ENCODE measurements at regions of chr6 and their contacts with region 1.

Region 1: DNA sequence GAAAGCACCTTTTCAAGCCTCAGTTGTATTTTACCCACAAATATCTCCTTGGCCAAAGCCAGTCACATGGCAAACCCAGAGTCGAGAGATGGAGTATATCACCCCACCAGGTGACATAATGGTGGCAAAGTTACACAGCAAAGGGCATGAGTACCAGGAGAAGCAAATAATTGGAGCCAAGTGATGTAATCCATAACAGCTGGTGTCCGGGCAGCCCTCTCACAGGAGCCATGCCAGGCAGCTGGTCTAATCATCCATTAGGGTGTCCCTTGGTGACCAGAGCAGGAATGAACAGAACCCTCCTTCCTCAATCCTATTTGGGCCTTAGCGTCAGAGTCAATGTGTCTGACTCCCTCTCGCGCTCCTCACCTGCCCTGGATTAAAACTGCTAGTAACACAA is 272.1 kb downstream of the LRFN2 start:
- DNase-seq: no peak
- H3K4me3 ChIP-seq: no peak overlapping the region
- H3K27ac ChIP-seq: no peak overlapping the region
- H3K4me1 ChIP-seq: no peaks in the 10 kb centered on the region
- H3K27me3 ChIP-seq: no peaks in the 10 kb centered on the region; a peak in 1 of 7 replicates
- CTCF ChIP-seq: no peak
- EP300 ChIP-seq: no peak
- POLR2A ChIP-seq: no peak
- RAD21 ChIP-seq: no peak

Region 2: GRCh38 chr6:39980839-39981580 is 334.1 kb before region 1 on chr6:
- CTCF ChIA-PET with region 1: interaction called, 15 read pairs
- POLR2A ChIA-PET with region 1: no interaction called
- DNase-seq: peak; percentile 7 to 48
- H3K4me3 ChIP-seq: no peak overlapping the region
- H3K27ac ChIP-seq: no peak overlapping the region
- H3K4me1 ChIP-seq: peaks cover 0 to 6% (median 2%) of the 10 kb centered on the region in 4 experiments; a peak in 2 of 7 replicates
- H3K27me3 ChIP-seq: no peaks in the 10 kb centered on the region
- CTCF ChIP-seq: peak; percentile 24 to 71 (median 62)
- EP300 ChIP-seq: no peak
- POLR2A ChIP-seq: no peak
- RAD21 ChIP-seq: peak; percentile 86 to 90

Region 3: DNA sequence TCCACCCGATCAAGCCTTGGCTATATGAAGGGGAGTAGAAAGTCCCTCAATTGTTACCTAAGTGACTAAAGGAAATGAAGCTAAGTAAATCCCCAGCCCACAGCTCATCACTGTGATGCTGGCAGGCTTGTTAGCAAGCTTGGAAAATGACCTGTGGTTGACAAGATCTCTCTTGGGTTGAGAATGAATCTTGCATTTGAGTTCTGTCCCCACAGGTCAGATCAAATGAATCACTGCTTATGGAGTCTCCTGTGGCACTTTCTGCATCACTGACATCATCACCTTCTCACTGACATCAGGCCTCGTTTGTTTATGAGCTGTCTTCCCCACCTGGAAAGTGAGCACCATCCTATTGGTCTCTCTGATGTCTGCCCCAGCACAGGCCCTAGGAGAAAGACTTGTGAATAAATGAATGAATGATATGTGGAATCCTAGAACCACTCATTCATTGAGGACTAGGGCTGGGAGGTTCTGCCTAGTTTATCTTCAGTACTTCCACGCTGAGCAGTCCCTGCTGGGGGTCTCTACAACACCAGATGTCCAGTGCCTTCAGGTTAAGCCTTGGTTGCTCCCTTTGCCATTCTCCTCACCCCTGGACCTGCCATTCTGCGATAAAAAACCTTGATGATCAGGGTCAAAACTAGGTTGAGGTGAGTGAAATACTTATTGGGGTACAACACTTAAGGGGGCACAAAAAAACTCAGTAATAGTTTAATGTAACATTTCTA is 62.4 kb before region 1 on chr6:
- CTCF ChIA-PET with region 1: no interaction called
- POLR2A ChIA-PET with region 1: no interaction called
- DNase-seq: no peak
- H3K4me3 ChIP-seq: no peak overlapping the region
- H3K27ac ChIP-seq: no peak overlapping the region
- H3K4me1 ChIP-seq: no peaks in the 10 kb centered on the region
- H3K27me3 ChIP-seq: no peaks in the 10 kb centered on the region
- CTCF ChIP-seq: no peak
- EP300 ChIP-seq: no peak
- POLR2A ChIP-seq: no peak
- RAD21 ChIP-seq: no peak

Region 4: GRCh38 chr6:40285996-40286395 is 29.1 kb before region 1 on chr6:
- CTCF ChIA-PET with region 1: no interaction called
- POLR2A ChIA-PET with region 1: no interaction called
- DNase-seq: no peak
- H3K4me3 ChIP-seq: peak overlapping the region in 2 of 4 experiments; percentile 6 to 41; a peak in 1 of 8 replicates
- H3K27ac ChIP-seq: no peak overlapping the region; the same call in 1 of the 2 replicates
- H3K4me1 ChIP-seq: peaks cover 17 to 39% (median 25%) of the 10 kb centered on the region in 4 experiments
- H3K27me3 ChIP-seq: no peaks in the 10 kb centered on the region
- CTCF ChIP-seq: no peak
- EP300 ChIP-seq: no peak
- POLR2A ChIP-seq: no peak
- RAD21 ChIP-seq: no peak; a peak in 1 of 4 replicates

Region 5: GRCh38 chr6:40302856-40303454 is 12.1 kb before region 1 on chr6:
- CTCF ChIA-PET with region 1: interaction called, 32 read pairs
- POLR2A ChIA-PET with region 1: no interaction called
- DNase-seq: no peak
- H3K4me3 ChIP-seq: no peak overlapping the region
- H3K27ac ChIP-seq: no peak overlapping the region
- H3K4me1 ChIP-seq: no peaks in the 10 kb centered on the region; a peak in 2 of 7 replicates
- H3K27me3 ChIP-seq: no peaks in the 10 kb centered on the region
- CTCF ChIP-seq: no peak
- EP300 ChIP-seq: no peak
- POLR2A ChIP-seq: no peak
- RAD21 ChIP-seq: no peak